WTC11 (cell line): ENCODE measurements at regions of chr5 and their contacts with region 1.

Region 1: GRCh38 chr5:149636851-149637246 is 55.6 kb downstream of the ARHGEF37 start:
- DNase-seq: peak; percentile 50
- ATAC-seq: peak; percentile 78
- H3K4me3 Mint-ChIP-seq: no peak overlapping the region
- H3K27ac Mint-ChIP-seq: no peak overlapping the region
- H3K4me1 Mint-ChIP-seq: peaks cover 24% of the 10 kb centered on the region
- H3K27me3 Mint-ChIP-seq: no peaks in the 10 kb centered on the region
- CTCF ChIP-seq: peak; percentile 59; the same call in 1 of the 2 replicates

Region 2: GRCh38 chr5:149828161-149828884 is 191.5 kb after region 1 on chr5:
- CTCF ChIA-PET with region 1: interaction called, 29 read pairs
- POLR2A ChIA-PET with region 1: interaction called, 3 read pairs
- DNase-seq: peak; percentile 90
- ATAC-seq: peak; percentile 94
- H3K4me3 Mint-ChIP-seq: no peak overlapping the region
- H3K27ac Mint-ChIP-seq: peak overlapping the region; percentile 67
- H3K4me1 Mint-ChIP-seq: peaks cover 5% of the 10 kb centered on the region
- H3K27me3 Mint-ChIP-seq: no peaks in the 10 kb centered on the region
- CTCF ChIP-seq: peak; percentile 68